K562 (cell line): ENCODE measurements at regions of chr14 and their contacts with region 1.

Region 1: DNA sequence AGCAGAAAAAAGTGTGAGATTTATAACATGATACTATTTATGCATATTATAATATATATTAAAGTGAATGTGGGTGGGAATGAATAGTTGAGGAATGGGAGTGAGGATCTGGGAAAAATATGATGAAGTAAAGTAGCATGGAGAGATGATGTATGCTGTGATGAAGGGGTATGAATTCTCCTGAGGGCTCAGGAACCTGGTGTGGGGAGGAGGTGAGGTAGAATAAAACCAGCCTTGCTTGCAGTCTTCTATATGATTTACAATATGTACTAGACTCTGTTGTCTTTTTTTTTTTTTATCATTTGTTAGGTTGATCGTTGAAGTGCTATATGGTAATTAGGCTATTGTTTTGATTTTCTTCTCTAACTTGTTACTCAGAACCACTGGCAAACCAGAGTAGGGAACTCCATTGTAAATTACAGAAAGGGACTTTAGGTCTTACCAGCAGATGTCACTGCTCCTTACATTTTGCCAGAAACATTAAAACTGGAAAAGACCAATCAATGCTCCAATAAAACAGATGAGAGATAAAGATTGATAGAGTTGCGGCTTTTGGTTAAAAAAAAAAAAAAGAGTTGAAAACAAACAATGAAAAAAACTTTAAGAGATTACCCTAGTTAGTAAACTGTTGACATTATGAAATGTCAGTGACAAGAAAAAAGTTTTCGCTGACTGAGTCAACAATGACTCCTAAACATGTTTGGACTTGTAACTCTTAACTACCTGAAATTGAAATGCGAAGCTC is 39.9 kb downstream of the ATL1 start:
- DNase-seq: peak in 2 of 4 experiments; percentile 6 to 23
- ATAC-seq: peak; percentile 61; the same call in 1 of the 3 replicates
- H3K4me3 ChIP-seq: no peak overlapping the region
- H3K27ac ChIP-seq: no peak overlapping the region
- H3K4me1 ChIP-seq: no peaks in the 10 kb centered on the region; a peak in 1 of 5 replicates
- H3K27me3 ChIP-seq: no peaks in the 10 kb centered on the region; a peak in 1 of 5 replicates
- CTCF ChIP-seq: peak; percentile 31 to 59 (median 47); a peak in 3 of 6 replicates
- EP300 ChIP-seq: no peak
- POLR2A ChIP-seq: no peak
- RAD21 ChIP-seq: peak; percentile 39 to 70

Region 2: GRCh38 chr14:50462111-50462510 is 137.8 kb before region 1 on chr14:
- CTCF ChIA-PET with region 1: no interaction called
- POLR2A ChIA-PET with region 1: no interaction called
- in situ Hi-C with region 1: no loop called
- intact Hi-C with region 1: no loop called
- DNase-seq: no peak
- ATAC-seq: no peak
- H3K4me3 ChIP-seq: no peak overlapping the region
- H3K27ac ChIP-seq: no peak overlapping the region
- H3K4me1 ChIP-seq: no peaks in the 10 kb centered on the region
- H3K27me3 ChIP-seq: no peaks in the 10 kb centered on the region
- CTCF ChIP-seq: no peak
- EP300 ChIP-seq: no peak
- POLR2A ChIP-seq: no peak
- RAD21 ChIP-seq: no peak

Region 3: GRCh38 chr14:50714450-50715073 is 114.7 kb after region 1 on chr14:
- CTCF ChIA-PET with region 1: no interaction called
- POLR2A ChIA-PET with region 1: no interaction called
- in situ Hi-C with region 1: no loop called
- intact Hi-C with region 1: loop called (anchors 5 kb)
- DNase-seq: peak; percentile 6 to 32 (median 19)
- ATAC-seq: peak; percentile 84
- H3K4me3 ChIP-seq: no peak overlapping the region
- H3K27ac ChIP-seq: no peak overlapping the region
- H3K4me1 ChIP-seq: no peaks in the 10 kb centered on the region
- H3K27me3 ChIP-seq: no peaks in the 10 kb centered on the region; a peak in 2 of 5 replicates
- CTCF ChIP-seq: peak; percentile 14 to 54 (median 52); a peak in 4 of 6 replicates
- EP300 ChIP-seq: no peak
- POLR2A ChIP-seq: no peak
- RAD21 ChIP-seq: peak in 1 of 2 experiments; percentile 65; a peak in 3 of 4 replicates

Region 4: GRCh38 chr14:50778721-50779483 is 179.0 kb after region 1 on chr14:
- CTCF ChIA-PET with region 1: interaction called, 16 read pairs
- POLR2A ChIA-PET with region 1: no interaction called
- in situ Hi-C with region 1: no loop called
- intact Hi-C with region 1: loop called (anchors 1 kb)
- DNase-seq: no peak
- ATAC-seq: no peak
- H3K4me3 ChIP-seq: no peak overlapping the region
- H3K27ac ChIP-seq: no peak overlapping the region
- H3K4me1 ChIP-seq: no peaks in the 10 kb centered on the region
- H3K27me3 ChIP-seq: no peaks in the 10 kb centered on the region
- CTCF ChIP-seq: no peak
- EP300 ChIP-seq: no peak
- POLR2A ChIP-seq: no peak
- RAD21 ChIP-seq: no peak

Region 5: GRCh38 chr14:50860478-50861086 is 260.7 kb after region 1 on chr14:
- CTCF ChIA-PET with region 1: no interaction called
- POLR2A ChIA-PET with region 1: no interaction called
- in situ Hi-C with region 1: no loop called
- intact Hi-C with region 1: loop called (anchors 10 kb)
- DNase-seq: peak; percentile 54 to 75 (median 68)
- ATAC-seq: peak; percentile 76
- H3K4me3 ChIP-seq: no peak overlapping the region
- H3K27ac ChIP-seq: no peak overlapping the region
- H3K4me1 ChIP-seq: no peaks in the 10 kb centered on the region; a peak in 1 of 5 replicates
- H3K27me3 ChIP-seq: peaks cover under 1 to 7% of the 10 kb centered on the region in 2 experiments; a peak in 1 of 5 replicates
- CTCF ChIP-seq: peak; percentile 53 to 63 (median 60)
- EP300 ChIP-seq: no peak
- POLR2A ChIP-seq: no peak
- RAD21 ChIP-seq: peak; percentile 50 to 51